Activated CD8-positive, alpha-beta memory T cell treated with anti-CD3 and anti-CD28 coated beads, Interleukin-2, amount 10 ng/mL, durations not matched to agents 7 days and 5 days (primary cell): ENCODE measurements at regions of chr22 and their contacts with region 1.

Region 1: GRCh38 chr22:25726241-25726640 is 15.7 kb upstream of the MYO18B start:
- DNase-seq: no peak
- ATAC-seq: no peak
- H3K4me3 Mint-ChIP-seq: no peak overlapping the region
- H3K27ac Mint-ChIP-seq: peak overlapping the region; percentile 60
- H3K4me1 Mint-ChIP-seq: peaks cover 15% of the 10 kb centered on the region
- H3K27me3 Mint-ChIP-seq: no peaks in the 10 kb centered on the region

Region 2: GRCh38 chr22:25709758-25710157 is 16.5 kb before region 1 on chr22:
- CTCF ChIA-PET with region 1: interaction called, 16 read pairs
- DNase-seq: peak; percentile 77
- ATAC-seq: peak; percentile 95
- H3K4me3 Mint-ChIP-seq: peak overlapping the region; percentile 19
- H3K27ac Mint-ChIP-seq: peak overlapping the region; percentile 89
- H3K4me1 Mint-ChIP-seq: peaks cover 41% of the 10 kb centered on the region
- H3K27me3 Mint-ChIP-seq: no peaks in the 10 kb centered on the region